ENCODE measurements at regions of chr9 and their contacts with region 1.

Region 1: GRCh38 chr9:21267485-21268346 is 27.9 kb upstream of the IFNA14 start:
- DNase-seq: no peak
- ATAC-seq: peak; percentile 87
- H3K4me3 ChIP-seq: no peak overlapping the region
- H3K27ac ChIP-seq: no peak overlapping the region
- H3K4me1 ChIP-seq: peaks cover 3% of the 10 kb centered on the region; the same call in 1 of the 2 replicates
- H3K27me3 ChIP-seq: no peaks in the 10 kb centered on the region; a peak in 1 of 4 replicates
- CTCF ChIP-seq: no peak
- EP300 ChIP-seq: no peak
- POLR2A ChIP-seq: no peak
- RAD21 ChIP-seq: no peak

Region 2: GRCh38 chr9:21294325-21294724 is 26.6 kb after region 1 on chr9:
- CTCF ChIA-PET with region 1: interaction called, 15 read pairs
- POLR2A ChIA-PET with region 1: no interaction called
- RAD21 ChIA-PET with region 1: interaction called, 4 read pairs
- SMC1A ChIA-PET with region 1: interaction called, 7 read pairs
- in situ Hi-C with region 1: no loop called
- intact Hi-C with region 1: no loop called
- DNase-seq: peak; percentile 15
- ATAC-seq: peak; percentile 66
- H3K4me3 ChIP-seq: no peak overlapping the region
- H3K27ac ChIP-seq: no peak overlapping the region
- H3K4me1 ChIP-seq: peaks cover 10% of the 10 kb centered on the region
- H3K27me3 ChIP-seq: no peaks in the 10 kb centered on the region; a peak in 1 of 4 replicates
- CTCF ChIP-seq: no peak
- EP300 ChIP-seq: no peak
- POLR2A ChIP-seq: no peak
- RAD21 ChIP-seq: no peak